Cardiac septum (tissue), 1 donor: ENCODE measurements at regions of chr18 and their contacts with region 1.

Region 1: DNA sequence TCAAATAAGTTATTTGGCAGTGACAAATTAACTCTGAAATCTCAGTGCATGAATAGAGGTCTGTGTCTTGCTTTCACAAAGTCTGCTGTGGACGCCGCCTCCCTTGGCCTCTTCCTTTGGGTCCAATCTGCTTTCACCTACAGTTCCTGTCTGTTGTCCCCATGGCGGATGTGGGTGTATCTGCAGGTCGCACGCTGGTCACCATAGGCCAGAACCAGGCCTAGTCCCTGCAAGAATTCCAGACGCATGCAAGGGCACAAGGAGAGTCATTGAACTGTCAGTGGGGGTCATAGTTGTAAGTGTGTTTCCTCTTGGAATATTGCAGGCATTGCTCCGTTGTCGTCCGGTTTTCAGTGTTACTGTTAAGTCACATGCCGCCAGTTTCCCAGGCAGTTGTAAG is 7.4 kb downstream of the SOCS6 start:
- DNase-seq: no peak

Region 2: GRCh38 chr18:70337139-70337972 is 41.1 kb after region 1 on chr18:
- intact Hi-C with region 1: loop called (anchors 5 kb)
- DNase-seq: no peak